ENCODE measurements at regions of chr12 and their contacts with region 1.

Region 1: GRCh38 chr12:64181504-64182291 is 40.4 kb downstream of the KICS2 start:
- DNase-seq: peak; percentile 79
- H3K4me3 ChIP-seq: no peak overlapping the region
- H3K27ac ChIP-seq: no peak overlapping the region
- H3K4me1 ChIP-seq: no peaks in the 10 kb centered on the region
- H3K27me3 ChIP-seq: no peaks in the 10 kb centered on the region
- CTCF ChIP-seq: peak; percentile 49 to 71 (median 66)
- POLR2A ChIP-seq: no peak

Region 2: GRCh38 chr12:63843721-63844390 is 337.8 kb before region 1 on chr12:
- intact Hi-C with region 1: loop called (anchors 10 kb)
- DNase-seq: peak; percentile 93
- H3K4me3 ChIP-seq: peak overlapping the region; percentile 82 to 94
- H3K27ac ChIP-seq: peak overlapping the region; percentile 95
- H3K4me1 ChIP-seq: peaks cover 4% of the 10 kb centered on the region
- H3K27me3 ChIP-seq: no peaks in the 10 kb centered on the region
- CTCF ChIP-seq: peak; percentile 91 to 98 (median 97)
- POLR2A ChIP-seq: no peak